ENCODE measurements at regions of chr4 and their contacts with region 1.

Region 1: DNA sequence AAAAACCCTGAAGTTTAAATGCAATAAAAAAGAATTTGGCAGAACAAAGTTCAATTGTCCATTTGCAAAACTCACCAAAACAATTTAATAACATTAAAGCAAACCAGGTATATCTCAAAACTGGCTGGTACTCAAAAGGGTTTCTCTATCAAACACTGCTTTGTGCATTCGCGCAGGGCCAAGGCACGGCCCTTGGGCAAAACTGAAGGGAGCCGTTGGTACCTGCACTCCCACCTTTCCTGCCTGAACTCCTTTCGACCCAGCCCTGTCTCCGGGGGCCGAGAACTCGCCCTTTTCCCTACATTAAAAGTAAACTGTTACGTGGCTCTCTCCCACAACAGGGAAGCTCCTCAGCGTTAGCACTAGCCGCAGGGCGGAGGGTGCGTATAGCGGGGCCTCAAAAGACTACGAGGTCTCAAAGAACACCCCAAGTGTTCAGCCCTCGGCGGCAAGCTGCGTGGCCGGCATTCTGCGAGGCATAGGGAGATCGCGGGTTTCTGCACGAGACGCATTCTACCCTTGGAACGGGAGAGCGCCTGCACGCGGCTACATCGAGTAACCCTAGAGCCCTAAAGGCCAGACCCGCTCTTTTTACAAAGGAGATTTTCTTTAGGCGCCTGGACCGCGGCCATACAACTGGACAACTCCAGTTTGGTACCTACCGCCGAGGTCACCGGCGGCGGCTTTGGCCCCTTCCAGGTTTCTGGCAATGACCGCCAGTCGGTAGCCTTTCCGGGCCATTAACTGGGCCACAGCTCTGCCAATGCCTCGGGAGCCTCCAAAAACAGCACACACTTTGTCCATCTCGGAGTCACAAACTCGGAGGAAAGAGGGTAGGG is 550 bp downstream of the CBR4 start:
- DNase-seq: peak; percentile 83
- H3K4me3 ChIP-seq: peak overlapping the region; percentile 71 to 80
- H3K27ac ChIP-seq: peak overlapping the region; percentile 85 to 91
- H3K4me1 ChIP-seq: peaks cover 12% of the 10 kb centered on the region
- H3K27me3 ChIP-seq: no peaks in the 10 kb centered on the region
- CTCF ChIP-seq: no peak
- POLR2A ChIP-seq: no peak

Region 2: DNA sequence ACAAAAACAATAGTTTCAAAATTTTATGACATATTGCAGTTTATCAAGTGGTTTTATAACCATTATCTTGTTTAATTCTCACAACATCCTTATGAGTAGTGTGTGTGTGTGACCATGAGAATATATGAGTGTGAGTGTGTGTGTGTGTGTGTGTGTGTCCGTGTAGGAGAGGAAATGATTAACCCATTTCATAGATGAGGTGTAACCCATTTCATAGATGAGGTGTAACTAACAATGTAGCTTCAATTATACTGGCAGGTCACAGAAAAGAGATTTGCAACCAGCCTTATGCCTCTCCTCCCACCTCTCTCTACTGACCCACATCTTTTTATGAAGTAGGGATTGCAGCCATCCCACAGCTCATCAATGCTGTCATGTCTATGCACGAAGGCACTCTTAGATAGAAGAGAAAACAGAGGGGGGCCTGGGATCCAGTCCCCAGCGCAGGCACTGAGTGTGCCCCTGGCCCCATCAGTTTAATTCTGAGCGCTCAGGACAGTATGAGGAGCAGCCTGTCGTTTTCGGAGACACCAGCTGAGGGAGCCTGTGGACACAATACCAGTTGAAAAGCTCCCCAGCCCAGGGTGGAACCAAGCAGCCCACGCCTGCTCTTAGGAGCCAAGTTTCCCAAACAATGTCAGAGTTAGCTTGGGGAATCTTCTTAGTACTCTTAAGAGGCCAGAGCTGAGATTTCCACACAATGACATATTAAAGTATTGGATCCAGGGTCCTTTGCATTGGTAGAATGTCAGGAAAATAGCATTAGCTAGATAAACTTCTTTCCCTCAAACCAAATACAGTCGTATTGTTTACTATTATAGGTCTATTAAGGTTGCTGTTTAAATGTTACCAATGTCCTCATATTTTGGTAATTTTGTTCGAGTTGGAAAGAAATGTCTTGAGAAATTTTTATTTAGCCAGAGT is 424.1 kb before region 1 on chr4:
- intact Hi-C with region 1: loop called (anchors 5 kb)
- DNase-seq: peak; percentile 86
- H3K4me3 ChIP-seq: no peak overlapping the region
- H3K27ac ChIP-seq: no peak overlapping the region
- H3K4me1 ChIP-seq: no peaks in the 10 kb centered on the region
- H3K27me3 ChIP-seq: no peaks in the 10 kb centered on the region
- CTCF ChIP-seq: peak; percentile 27 to 55 (median 44)
- POLR2A ChIP-seq: no peak